PC-9 (cell line): ENCODE measurements at regions of chr1 and their contacts with region 1.

Region 1: DNA sequence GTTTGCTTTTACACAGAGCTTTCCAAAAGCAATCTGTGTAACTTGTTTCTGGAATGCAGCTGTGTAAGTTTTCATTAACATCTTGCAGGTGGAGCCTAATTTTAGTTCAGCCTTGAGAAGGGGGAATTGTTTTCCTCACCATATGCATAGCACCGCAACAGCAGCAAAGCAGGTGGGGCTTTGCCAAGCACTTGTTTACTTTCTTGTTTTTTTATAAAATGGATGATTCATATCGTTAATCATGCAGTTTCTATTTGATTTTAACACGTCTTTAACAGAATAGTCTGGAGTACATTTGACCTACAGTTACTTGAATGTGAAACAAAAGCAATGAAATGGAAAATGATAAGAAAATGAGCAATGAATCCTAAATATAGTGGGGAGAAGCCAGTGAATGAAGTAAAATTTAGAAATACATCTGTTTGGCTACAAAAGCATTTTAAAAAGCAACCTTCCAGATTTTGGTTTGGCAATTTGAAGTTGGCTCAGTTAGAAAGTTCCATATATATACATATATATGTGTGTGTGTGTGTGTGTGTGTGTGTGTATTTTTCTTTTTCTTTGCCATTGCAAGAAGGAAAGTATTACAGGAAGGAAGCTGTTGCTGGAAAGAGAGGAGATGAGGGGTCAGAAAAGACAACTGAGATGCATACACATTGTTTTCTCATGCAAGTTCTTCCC is 119.0 kb upstream of the ADGRL2 start:
- DNase-seq: peak; percentile 68 to 100
- H3K4me3 ChIP-seq: peak overlapping the region; percentile 38; the same call in 1 of the 2 replicates
- H3K27ac ChIP-seq: peak overlapping the region; percentile 98
- H3K4me1 ChIP-seq: peaks cover 57% of the 10 kb centered on the region
- H3K27me3 ChIP-seq: no peaks in the 10 kb centered on the region
- CTCF ChIP-seq: no peak

Region 2: GRCh38 chr1:81179242-81179641 is 502.5 kb before region 1 on chr1:
- CTCF ChIA-PET with region 1: no interaction called
- POLR2A ChIA-PET with region 1: no interaction called
- intact Hi-C with region 1: loop called (anchors 10 kb)
- DNase-seq: peak; percentile 16 to 92
- H3K4me3 ChIP-seq: no peak overlapping the region
- H3K27ac ChIP-seq: peak overlapping the region; percentile 48
- H3K4me1 ChIP-seq: peaks cover 26% of the 10 kb centered on the region
- H3K27me3 ChIP-seq: no peaks in the 10 kb centered on the region
- CTCF ChIP-seq: no peak

Region 3: DNA sequence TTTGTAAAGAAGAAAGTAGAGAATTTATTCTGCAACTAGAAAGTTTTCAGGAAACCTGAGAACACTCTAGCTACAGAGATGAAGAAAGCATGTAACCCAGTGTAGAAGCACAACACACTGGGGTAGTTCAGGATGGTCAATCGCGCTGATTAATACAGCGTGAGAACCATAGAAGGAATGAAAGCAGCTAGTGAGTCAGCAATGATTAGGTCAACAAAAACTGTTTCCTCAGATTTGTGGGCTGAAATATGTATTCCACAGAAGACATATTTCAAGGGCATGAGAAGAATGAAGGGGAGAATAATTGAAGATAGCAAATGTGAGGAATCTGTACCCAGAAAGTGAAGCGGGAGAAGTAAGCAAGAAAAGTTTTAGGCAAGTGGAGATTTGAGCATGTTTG is 21.2 kb after region 1 on chr1:
- CTCF ChIA-PET with region 1: no interaction called
- POLR2A ChIA-PET with region 1: no interaction called
- intact Hi-C with region 1: loop called (anchors 1 kb)
- DNase-seq: peak in 1 of 2 experiments; percentile 98
- H3K4me3 ChIP-seq: peak overlapping the region; percentile 62
- H3K27ac ChIP-seq: peak overlapping the region; percentile 98
- H3K4me1 ChIP-seq: peaks cover 75% of the 10 kb centered on the region
- H3K27me3 ChIP-seq: no peaks in the 10 kb centered on the region
- CTCF ChIP-seq: no peak

Region 4: GRCh38 chr1:81800695-81801650 is 119.2 kb after region 1 on chr1 and contains the start of gene ADGRL2:
- CTCF ChIA-PET with region 1: no interaction called
- POLR2A ChIA-PET with region 1: no interaction called
- intact Hi-C with region 1: loop called (anchors 2 kb)
- DNase-seq: peak; percentile 70 to 81
- H3K4me3 ChIP-seq: peak within 1 kb of the TSS; percentile 96
- H3K27ac ChIP-seq: peak within 1 kb of the TSS; percentile 76
- H3K4me1 ChIP-seq: peaks cover 25% of the 10 kb centered on the region
- H3K27me3 ChIP-seq: no peaks in the 10 kb centered on the region
- CTCF ChIP-seq: no peak
- total RNA-seq, gene ADGRL2: 24.0 and 25.3 TPM in 2 replicates